Mammary epithelial cell (primary cell): ENCODE measurements at regions of chr5 and their contacts with region 1.

Region 1: DNA sequence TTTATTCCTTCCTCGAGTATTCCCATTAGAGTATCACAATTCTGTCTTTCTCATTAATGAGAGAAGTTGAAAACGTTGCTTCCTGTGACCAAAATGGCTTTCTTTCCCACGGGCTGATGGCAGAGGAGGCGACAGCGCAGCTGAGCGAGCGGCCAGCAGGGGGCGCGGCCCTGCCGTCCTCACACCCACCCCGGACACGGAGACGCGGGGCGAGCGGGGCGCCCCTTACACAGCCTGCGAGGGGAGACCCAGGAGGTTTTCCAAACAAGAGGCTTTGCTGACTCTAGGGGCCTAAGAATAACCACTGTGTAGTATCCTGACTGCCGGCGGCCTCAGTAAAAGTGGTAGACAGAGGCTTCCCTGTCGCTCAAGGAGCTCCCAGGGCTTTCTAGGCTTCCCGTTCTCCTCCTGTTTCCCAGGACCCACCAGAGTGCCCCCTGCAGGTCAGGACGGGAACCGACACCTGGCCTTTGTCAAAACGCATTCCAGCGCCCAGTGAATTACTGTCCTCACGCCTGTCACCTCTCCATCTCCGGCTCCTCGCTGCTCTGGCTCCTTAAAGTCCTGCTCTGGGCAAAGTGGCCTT is 27.3 kb upstream of the FGF1 start:
- DNase-seq: peak; percentile 79
- H3K4me3 ChIP-seq: peak overlapping the region; percentile 59 to 70 (median 67)
- H3K27ac ChIP-seq: peak overlapping the region; percentile 68
- H3K4me1 ChIP-seq: peaks cover 5% of the 10 kb centered on the region
- H3K27me3 ChIP-seq: no peaks in the 10 kb centered on the region
- CTCF ChIP-seq: peak; percentile 73 to 88

Region 2: GRCh38 chr5:142618130-142618523 is 95.1 kb before region 1 on chr5:
- CTCF ChIA-PET with region 1: interaction called, 13 read pairs
- dilution Hi-C with region 1: no loop called
- in situ Hi-C with region 1: no loop called
- intact Hi-C with region 1: no loop called
- DNase-seq: peak; percentile 77
- H3K4me3 ChIP-seq: no peak overlapping the region
- H3K27ac ChIP-seq: no peak overlapping the region
- H3K4me1 ChIP-seq: peaks cover 47% of the 10 kb centered on the region
- H3K27me3 ChIP-seq: no peaks in the 10 kb centered on the region
- CTCF ChIP-seq: no peak

Region 3: DNA sequence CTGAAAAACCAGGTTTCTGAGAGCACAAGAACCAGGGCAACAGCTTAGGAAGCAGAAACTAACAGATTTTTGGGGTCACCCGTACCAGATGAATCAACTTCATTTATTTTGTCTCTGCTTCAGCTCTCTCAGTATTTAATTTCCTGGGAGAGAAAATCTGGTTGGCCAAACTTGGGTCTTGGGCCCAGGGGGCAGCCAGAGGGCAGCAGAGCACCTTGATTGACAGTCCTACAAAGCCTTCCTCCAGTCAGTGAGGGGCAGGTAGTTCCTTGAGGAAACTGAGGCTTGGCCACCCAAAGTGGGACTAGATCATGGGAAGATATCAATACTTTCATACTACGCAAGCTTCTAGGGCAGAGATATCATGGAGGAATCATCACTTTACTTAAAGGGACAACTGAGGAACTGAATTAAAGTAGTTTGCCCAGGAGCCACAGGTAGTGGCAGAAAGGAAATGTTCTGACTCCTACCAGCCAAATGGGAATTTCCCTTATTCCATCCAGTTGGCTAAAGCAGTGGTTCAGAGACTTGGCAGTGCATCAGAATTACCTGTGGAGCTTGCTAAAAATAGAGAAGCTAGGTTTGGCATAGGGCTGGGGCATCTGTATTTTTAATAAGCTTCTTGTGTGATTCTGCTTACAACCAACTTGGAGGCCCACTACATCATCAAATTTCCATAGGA is 35.5 kb after region 1 on chr5:
- CTCF ChIA-PET with region 1: no interaction called
- dilution Hi-C with region 1: no loop called
- in situ Hi-C with region 1: no loop called
- intact Hi-C with region 1: loop called (anchors 1 kb)
- DNase-seq: peak; percentile 76
- H3K4me3 ChIP-seq: no peak overlapping the region
- H3K27ac ChIP-seq: peak overlapping the region; percentile 28
- H3K4me1 ChIP-seq: peaks cover 26% of the 10 kb centered on the region
- H3K27me3 ChIP-seq: no peaks in the 10 kb centered on the region
- CTCF ChIP-seq: peak; percentile 44 to 55

Region 4: DNA sequence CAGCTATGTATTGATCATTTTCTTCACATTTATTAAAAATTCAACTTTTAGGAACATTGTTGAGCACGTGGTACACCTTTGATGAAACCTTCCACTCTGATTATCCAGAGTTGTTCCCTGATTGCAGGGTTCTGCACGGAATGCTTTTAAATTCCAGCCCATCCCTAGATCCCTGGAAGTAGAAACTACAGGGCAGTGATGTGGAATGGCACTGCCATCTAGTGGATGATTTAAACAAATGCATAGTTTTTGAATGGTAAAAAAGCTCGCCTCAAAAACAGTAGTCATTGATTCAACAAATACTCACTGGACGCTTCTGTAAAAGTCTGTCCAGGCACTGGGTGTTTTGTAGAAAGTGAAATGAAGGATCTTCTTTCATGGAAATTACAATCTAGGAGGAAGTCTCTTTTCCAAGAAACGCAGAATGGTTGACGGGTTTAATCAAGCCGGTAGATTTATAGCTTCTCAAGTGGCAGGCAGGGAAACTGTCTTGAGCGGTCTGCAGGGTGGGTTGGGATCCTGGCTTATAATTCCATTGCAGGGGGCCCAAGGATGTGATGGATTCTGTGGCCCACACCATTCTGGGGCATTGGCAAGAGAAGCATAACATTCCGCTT is 175.4 kb after region 1 on chr5:
- CTCF ChIA-PET with region 1: interaction called, 4 read pairs
- dilution Hi-C with region 1: no loop called
- in situ Hi-C with region 1: loop called in 1 of 2 experiments (anchors 5 kb)
- intact Hi-C with region 1: loop called (anchors 1 kb)
- DNase-seq: no peak
- H3K4me3 ChIP-seq: no peak overlapping the region
- H3K27ac ChIP-seq: no peak overlapping the region
- H3K4me1 ChIP-seq: no peaks in the 10 kb centered on the region
- H3K27me3 ChIP-seq: no peaks in the 10 kb centered on the region
- CTCF ChIP-seq: peak; percentile 53 to 70

Region 5: GRCh38 chr5:143968011-143968878 is 1255.0 kb after region 1 on chr5:
- CTCF ChIA-PET with region 1: no interaction called
- dilution Hi-C with region 1: no loop called
- in situ Hi-C with region 1: no loop called
- intact Hi-C with region 1: loop called (anchors 1 kb)
- DNase-seq: peak; percentile 70
- H3K4me3 ChIP-seq: no peak overlapping the region
- H3K27ac ChIP-seq: no peak overlapping the region
- H3K4me1 ChIP-seq: peaks cover 7% of the 10 kb centered on the region
- H3K27me3 ChIP-seq: no peaks in the 10 kb centered on the region
- CTCF ChIP-seq: peak; percentile 39 to 59